Caco-2 (cell line): ENCODE measurements at regions of chr11 and their contacts with region 1.

Region 1: DNA sequence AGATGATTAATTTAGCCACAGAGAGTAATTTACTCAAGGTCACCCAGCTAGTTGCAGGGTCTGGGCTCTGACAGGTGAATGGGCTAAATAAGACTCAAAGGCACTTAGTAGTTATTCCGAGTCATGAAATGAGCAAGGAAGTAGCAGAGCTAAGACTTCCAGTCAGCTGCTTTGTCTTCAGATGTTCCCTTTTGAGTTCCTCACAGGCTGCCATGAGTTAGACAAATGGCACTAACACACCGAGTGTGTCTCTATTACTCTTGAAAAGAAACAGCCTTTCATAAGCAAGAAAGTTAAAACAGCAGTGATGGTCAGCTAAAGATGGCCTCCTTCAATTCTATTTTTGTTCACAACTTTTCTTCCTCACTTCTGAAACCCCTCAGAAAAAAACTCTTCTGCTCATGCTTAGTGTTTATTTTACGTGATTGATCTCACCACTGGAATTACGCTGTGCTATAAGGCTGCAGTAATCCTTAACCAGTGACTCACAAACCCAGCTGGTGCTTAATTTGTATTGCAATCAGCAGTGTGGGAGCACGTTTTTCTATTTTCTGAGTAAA is 389.1 kb downstream of the AASDHPPT start:
- DNase-seq: peak; percentile 76 to 85
- H3K4me3 ChIP-seq: no peak overlapping the region
- H3K4me3 Mint-ChIP-seq: peak overlapping the region; percentile 67
- H3K27ac Mint-ChIP-seq: peak overlapping the region; percentile 88
- H3K4me1 ChIP-seq: peaks cover 92% of the 10 kb centered on the region
- H3K4me1 Mint-ChIP-seq: peaks cover 77% of the 10 kb centered on the region
- H3K27me3 ChIP-seq: no peaks in the 10 kb centered on the region
- H3K27me3 Mint-ChIP-seq: no peaks in the 10 kb centered on the region
- CTCF ChIP-seq: no peak

Region 2: DNA sequence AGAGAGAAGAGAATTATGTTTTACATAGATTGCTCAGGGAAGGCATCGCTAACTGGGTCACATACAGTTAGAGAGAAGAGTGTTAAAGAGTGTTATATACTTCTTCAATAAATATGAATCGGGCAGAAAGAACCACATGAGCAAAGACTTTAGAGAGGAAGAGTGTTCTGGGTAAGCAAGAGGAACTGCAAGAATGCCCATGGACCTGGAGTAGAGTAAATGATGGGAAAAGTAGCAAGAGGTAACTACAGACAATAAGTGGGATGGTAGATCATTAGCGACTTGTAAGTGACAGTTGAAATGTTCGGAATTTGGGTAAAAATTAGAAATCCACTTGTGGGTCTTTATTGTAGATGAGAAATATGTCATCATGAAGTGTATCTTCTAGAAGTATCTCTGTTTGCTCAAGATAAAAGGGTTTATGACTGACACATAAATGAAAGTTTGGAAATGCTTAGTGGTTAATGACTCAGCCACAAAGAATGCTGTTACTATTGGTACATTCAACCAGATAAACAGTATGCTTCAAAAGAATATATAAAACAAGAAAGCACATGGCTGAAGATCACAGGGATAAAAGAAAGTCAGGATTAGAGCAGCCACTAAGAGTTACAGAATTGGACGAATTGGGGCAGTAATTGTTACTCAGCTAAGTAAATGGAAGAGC is 1797.7 kb before region 1 on chr11:
- CTCF ChIA-PET with region 1: no interaction called
- POLR2A ChIA-PET with region 1: no interaction called
- intact Hi-C with region 1: loop called (anchors 10 kb)
- DNase-seq: peak in 1 of 2 experiments; percentile 82
- H3K4me3 ChIP-seq: no peak overlapping the region
- H3K4me3 Mint-ChIP-seq: peak overlapping the region; percentile 20
- H3K27ac Mint-ChIP-seq: peak overlapping the region; percentile 74
- H3K4me1 ChIP-seq: peaks cover 47% of the 10 kb centered on the region
- H3K4me1 Mint-ChIP-seq: peaks cover 51% of the 10 kb centered on the region
- H3K27me3 ChIP-seq: no peaks in the 10 kb centered on the region
- H3K27me3 Mint-ChIP-seq: no peaks in the 10 kb centered on the region
- CTCF ChIP-seq: no peak

Region 3: GRCh38 chr11:106178361-106178760 is 288.2 kb before region 1 on chr11:
- CTCF ChIA-PET with region 1: no interaction called
- POLR2A ChIA-PET with region 1: no interaction called
- intact Hi-C with region 1: loop called (anchors 2 kb)
- DNase-seq: no peak
- H3K4me3 ChIP-seq: no peak overlapping the region
- H3K4me3 Mint-ChIP-seq: no peak overlapping the region
- H3K27ac Mint-ChIP-seq: no peak overlapping the region
- H3K4me1 ChIP-seq: peaks cover 11% of the 10 kb centered on the region; the same call in 1 of the 2 replicates
- H3K4me1 Mint-ChIP-seq: peaks cover 7% of the 10 kb centered on the region
- H3K27me3 ChIP-seq: no peaks in the 10 kb centered on the region
- H3K27me3 Mint-ChIP-seq: no peaks in the 10 kb centered on the region
- CTCF ChIP-seq: no peak

Region 4: DNA sequence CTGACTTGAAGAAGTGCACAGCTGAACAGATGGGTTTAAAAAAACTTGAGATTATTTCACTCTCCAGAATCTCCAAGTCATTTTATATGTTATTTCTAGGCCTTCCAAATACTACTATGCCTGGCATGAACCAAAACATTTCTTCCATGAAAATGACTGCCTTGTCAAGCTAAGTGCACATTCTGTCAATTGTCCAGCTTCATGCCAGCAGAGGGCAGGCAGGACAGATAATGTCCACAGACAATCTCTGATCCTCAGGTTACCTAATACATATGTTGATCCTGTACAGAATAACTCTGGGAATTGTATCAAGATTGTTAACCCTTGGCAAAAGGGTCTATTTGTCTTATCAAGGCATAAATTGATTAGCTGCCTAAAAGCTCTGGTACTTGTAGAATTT is 159.7 kb before region 1 on chr11:
- CTCF ChIA-PET with region 1: no interaction called
- POLR2A ChIA-PET with region 1: no interaction called
- intact Hi-C with region 1: loop called (anchors 1 kb)
- DNase-seq: peak; percentile 44 to 56
- H3K4me3 ChIP-seq: no peak overlapping the region
- H3K4me3 Mint-ChIP-seq: no peak overlapping the region
- H3K27ac Mint-ChIP-seq: no peak overlapping the region
- H3K4me1 ChIP-seq: no peaks in the 10 kb centered on the region
- H3K4me1 Mint-ChIP-seq: peaks cover 10% of the 10 kb centered on the region
- H3K27me3 ChIP-seq: no peaks in the 10 kb centered on the region
- H3K27me3 Mint-ChIP-seq: no peaks in the 10 kb centered on the region
- CTCF ChIP-seq: peak in 1 of 2 experiments; percentile 24

Region 5: GRCh38 chr11:106446955-106447354 is 19.6 kb before region 1 on chr11:
- CTCF ChIA-PET with region 1: no interaction called
- POLR2A ChIA-PET with region 1: no interaction called
- intact Hi-C with region 1: loop called (anchors 1 kb)
- DNase-seq: peak in 1 of 2 experiments; percentile 37
- H3K4me3 ChIP-seq: no peak overlapping the region
- H3K4me3 Mint-ChIP-seq: peak overlapping the region; percentile 31
- H3K27ac Mint-ChIP-seq: peak overlapping the region; percentile 79
- H3K4me1 ChIP-seq: peaks cover 42% of the 10 kb centered on the region
- H3K4me1 Mint-ChIP-seq: peaks cover 31% of the 10 kb centered on the region
- H3K27me3 ChIP-seq: no peaks in the 10 kb centered on the region
- H3K27me3 Mint-ChIP-seq: no peaks in the 10 kb centered on the region
- CTCF ChIP-seq: no peak

Region 6: GRCh38 chr11:106702805-106703204 is 236.2 kb after region 1 on chr11:
- CTCF ChIA-PET with region 1: no interaction called
- POLR2A ChIA-PET with region 1: no interaction called
- intact Hi-C with region 1: loop called (anchors 5 kb)
- DNase-seq: no peak
- H3K4me3 ChIP-seq: no peak overlapping the region
- H3K4me3 Mint-ChIP-seq: no peak overlapping the region
- H3K27ac Mint-ChIP-seq: no peak overlapping the region
- H3K4me1 ChIP-seq: peaks cover 4% of the 10 kb centered on the region; the same call in 1 of the 2 replicates
- H3K4me1 Mint-ChIP-seq: peaks cover 6% of the 10 kb centered on the region
- H3K27me3 ChIP-seq: no peaks in the 10 kb centered on the region
- H3K27me3 Mint-ChIP-seq: no peaks in the 10 kb centered on the region
- CTCF ChIP-seq: no peak